Gastrocnemius medialis (tissue), 4 donors: ENCODE measurements at regions of chr6 and their contacts with region 1.

Region 1: GRCh38 chr6:158086504-158087223 is 81.4 kb downstream of the SERAC1 start:
- DNase-seq: no peak
- ATAC-seq: no peak
- H3K4me3 ChIP-seq: no peak overlapping the region
- H3K27ac ChIP-seq: no peak overlapping the region
- H3K4me1 ChIP-seq: peaks cover 0 to 3% of the 10 kb centered on the region in 2 donors
- H3K27me3 ChIP-seq: no peaks in the 10 kb centered on the region
- CTCF ChIP-seq: no peak
- POLR2A ChIP-seq: no peak

Region 2: GRCh38 chr6:157929076-157929475 is 157.6 kb before region 1 on chr6:
- in situ Hi-C with region 1: no loop called
- intact Hi-C with region 1: no loop called
- DNase-seq: no peak
- ATAC-seq: no peak
- H3K4me3 ChIP-seq: no peak overlapping the region
- H3K27ac ChIP-seq: no peak overlapping the region
- H3K4me1 ChIP-seq: no peaks in the 10 kb centered on the region
- H3K27me3 ChIP-seq: no peaks in the 10 kb centered on the region
- CTCF ChIP-seq: no peak
- POLR2A ChIP-seq: no peak

Region 3: GRCh38 chr6:157974341-157974894 is 112.2 kb before region 1 on chr6:
- in situ Hi-C with region 1: loop called in 1 of 4 experiments (anchors 10 kb)
- intact Hi-C with region 1: no loop called
- DNase-seq: no peak
- ATAC-seq: no peak
- H3K4me3 ChIP-seq: no peak overlapping the region
- H3K27ac ChIP-seq: no peak overlapping the region
- H3K4me1 ChIP-seq: no peaks in the 10 kb centered on the region
- H3K27me3 ChIP-seq: no peaks in the 10 kb centered on the region
- CTCF ChIP-seq: no peak
- POLR2A ChIP-seq: no peak